Mammary epithelial cell (primary cell): ENCODE measurements at regions of chr19 and their contacts with region 1.

Region 1: DNA sequence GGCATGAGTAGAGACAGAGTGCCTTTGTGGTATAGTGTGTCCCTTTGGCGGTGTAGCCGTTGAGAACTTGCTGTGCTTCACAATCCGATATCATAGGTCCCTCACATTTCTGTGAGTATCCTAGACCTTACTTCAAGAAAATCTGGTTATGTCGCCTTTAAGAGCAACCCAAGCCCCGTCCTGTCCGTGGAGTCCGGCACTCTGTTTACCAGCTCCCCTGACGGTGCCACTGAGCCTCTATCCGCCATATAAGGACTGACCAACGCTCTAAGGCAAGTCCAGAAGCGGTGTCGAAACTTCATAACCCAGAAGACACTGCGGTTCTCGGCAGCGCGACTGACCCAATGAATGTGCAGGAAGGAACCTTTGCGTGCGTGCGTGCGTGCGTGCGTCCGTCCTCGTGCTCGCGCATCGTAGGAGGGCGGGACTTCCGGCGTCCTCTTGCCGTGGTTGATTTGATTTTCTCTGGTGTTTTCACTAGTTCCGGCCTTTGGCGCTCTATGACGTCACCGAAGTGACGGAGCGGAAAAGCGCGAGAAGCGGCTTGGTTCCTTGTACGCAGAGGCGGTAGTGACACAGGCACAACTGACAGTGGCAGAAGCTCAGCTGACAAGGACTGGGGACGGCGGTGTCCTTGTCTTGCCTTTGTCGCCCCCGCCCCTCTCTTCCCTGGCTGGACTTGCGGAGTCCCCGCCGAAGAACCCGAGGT is at the starts of genes TRAPPC2B and ZNF547:
- DNase-seq: peak; percentile 100
- H3K4me3 ChIP-seq: peak within 1 kb of the TSS; percentile 60 to 95 (median 66)
- H3K27ac ChIP-seq: peak within 1 kb of the TSS; percentile 71
- H3K4me1 ChIP-seq: peaks cover 4% of the 10 kb centered on the region
- H3K27me3 ChIP-seq: no peaks in the 10 kb centered on the region
- CTCF ChIP-seq: no peak
- total RNA-seq, gene TRAPPC2B: 4.9 to 9.3 TPM
- total RNA-seq, gene ZNF547: 2.3 to 4.3 TPM

Region 2: DNA sequence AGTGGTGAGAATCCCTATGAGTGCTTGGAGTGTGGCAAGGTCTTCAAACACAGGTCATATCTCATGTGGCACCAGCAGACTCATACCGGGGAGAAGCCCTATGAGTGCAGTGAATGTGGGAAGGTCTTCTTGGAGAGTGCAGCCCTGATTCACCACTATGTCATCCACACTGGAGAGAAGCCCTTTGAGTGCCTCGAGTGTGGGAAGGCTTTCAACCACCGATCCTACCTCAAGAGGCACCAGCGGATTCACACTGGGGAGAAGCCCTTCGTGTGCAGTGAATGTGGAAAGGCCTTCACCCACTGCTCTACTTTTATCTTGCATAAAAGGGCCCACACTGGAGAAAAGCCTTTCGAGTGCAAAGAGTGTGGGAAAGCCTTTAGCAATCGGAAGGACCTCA is 151.0 kb before region 1 on chr19:
- CTCF ChIA-PET with region 1: no interaction called
- dilution Hi-C with region 1: loop called (anchors 10 kb)
- in situ Hi-C with region 1: no loop called
- intact Hi-C with region 1: no loop called
- DNase-seq: no peak
- H3K4me3 ChIP-seq: no peak overlapping the region
- H3K27ac ChIP-seq: no peak overlapping the region
- H3K4me1 ChIP-seq: no peaks in the 10 kb centered on the region
- H3K27me3 ChIP-seq: no peaks in the 10 kb centered on the region
- CTCF ChIP-seq: no peak

Region 3: GRCh38 chr19:57279418-57280066 is 83.6 kb before region 1 on chr19:
- CTCF ChIA-PET with region 1: no interaction called
- dilution Hi-C with region 1: loop called (anchors 5 kb)
- in situ Hi-C with region 1: no loop called
- intact Hi-C with region 1: loop called (anchors 1 kb)
- DNase-seq: peak; percentile 92
- H3K4me3 ChIP-seq: peak overlapping the region; percentile 48 to 71 (median 66)
- H3K27ac ChIP-seq: peak overlapping the region; percentile 97
- H3K4me1 ChIP-seq: peaks cover 35% of the 10 kb centered on the region
- H3K27me3 ChIP-seq: no peaks in the 10 kb centered on the region
- CTCF ChIP-seq: peak; percentile 22 to 64

Region 4: DNA sequence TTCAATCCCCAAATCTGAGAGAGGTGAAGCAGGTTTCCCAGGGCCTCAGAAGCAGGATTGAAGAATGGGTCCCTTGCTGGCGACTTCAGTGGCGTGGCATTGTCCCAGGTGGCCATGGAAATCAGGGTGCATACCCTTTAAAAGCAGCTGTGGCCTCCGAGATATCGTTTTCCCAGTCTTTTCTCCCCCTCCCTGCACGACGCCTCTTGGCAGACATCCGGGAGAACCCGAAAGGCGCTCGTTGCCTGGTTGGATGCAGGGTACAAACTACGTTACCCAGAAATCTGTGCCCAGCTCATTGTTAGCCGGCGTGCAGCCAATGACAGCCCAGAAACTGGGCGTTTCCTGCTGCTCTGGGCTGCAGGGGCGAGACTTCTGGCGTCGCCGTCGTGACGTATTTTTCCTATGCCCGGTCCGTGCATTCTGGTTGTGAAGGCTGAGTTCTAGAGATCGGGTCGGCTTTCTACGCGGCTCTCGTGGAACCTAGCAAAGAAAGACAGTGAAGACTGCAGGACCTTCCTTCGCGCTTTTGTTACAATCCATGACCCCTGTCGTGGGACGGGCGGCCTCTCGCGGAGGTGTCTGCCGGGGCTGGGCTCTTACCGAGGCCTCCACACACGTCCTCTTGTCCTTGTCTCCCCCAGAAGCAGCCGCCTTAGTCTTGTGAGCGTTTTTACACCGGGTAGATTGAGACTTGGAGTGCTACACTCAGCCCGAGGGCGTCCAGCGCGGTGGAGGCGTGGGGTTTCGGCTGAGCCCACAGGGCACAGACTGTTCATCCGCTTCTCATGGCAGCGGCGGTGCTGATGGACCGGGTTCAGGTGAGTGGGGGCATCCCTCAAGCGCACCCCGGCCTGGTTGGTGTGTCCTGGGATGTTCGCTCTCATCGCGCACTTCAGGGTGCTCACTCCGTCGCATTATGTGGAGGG is 12.0 kb before region 1 on chr19 and contains the start of gene ZNF304:
- CTCF ChIA-PET with region 1: no interaction called
- dilution Hi-C with region 1: no loop called
- in situ Hi-C with region 1: no loop called
- intact Hi-C with region 1: loop called (anchors 1 kb)
- DNase-seq: peak; percentile 96
- H3K4me3 ChIP-seq: peak within 1 kb of the TSS; percentile 78 to 98 (median 96)
- H3K27ac ChIP-seq: peak within 1 kb of the TSS; percentile 83
- H3K4me1 ChIP-seq: peaks cover 8% of the 10 kb centered on the region
- H3K27me3 ChIP-seq: no peaks in the 10 kb centered on the region
- CTCF ChIP-seq: peak in 1 of 2 donors; percentile 7
- total RNA-seq, gene ZNF304: 8.0 to 16.5 TPM

Region 5: DNA sequence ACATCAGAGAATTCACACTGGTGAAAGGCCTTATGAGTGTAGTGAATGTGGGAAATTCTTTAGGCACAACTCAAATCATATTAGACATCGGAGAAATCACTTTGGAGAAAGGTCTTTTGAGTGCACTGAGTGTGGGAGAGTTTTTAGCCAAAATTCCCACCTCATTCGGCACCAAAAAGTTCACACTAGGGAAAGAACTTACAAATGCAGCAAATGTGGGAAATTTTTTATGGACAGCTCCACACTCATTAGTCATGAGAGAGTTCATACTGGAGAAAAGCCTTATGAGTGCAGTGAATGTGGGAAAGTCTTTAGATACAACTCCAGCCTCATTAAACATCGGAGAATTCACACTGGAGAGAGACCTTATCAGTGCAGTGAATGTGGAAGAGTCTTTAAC is 57.9 kb after region 1 on chr19:
- CTCF ChIA-PET with region 1: no interaction called
- dilution Hi-C with region 1: loop called (anchors 10 kb)
- in situ Hi-C with region 1: no loop called
- intact Hi-C with region 1: no loop called
- DNase-seq: no peak
- H3K4me3 ChIP-seq: no peak overlapping the region
- H3K27ac ChIP-seq: no peak overlapping the region
- H3K4me1 ChIP-seq: no peaks in the 10 kb centered on the region
- H3K27me3 ChIP-seq: no peaks in the 10 kb centered on the region
- CTCF ChIP-seq: no peak